CD4-positive, alpha-beta memory T cell (primary cell): ENCODE measurements at regions of chr1 and their contacts with region 1.

Region 1: GRCh38 chr1:185595835-185596667 is 138.1 kb upstream of the HMCN1 start:
- DNase-seq: peak; percentile 56 to 67 (median 62)
- H3K4me3 ChIP-seq: no peak overlapping the region
- H3K4me3 Mint-ChIP-seq: no peak overlapping the region
- H3K27ac ChIP-seq: no peak overlapping the region
- H3K27ac Mint-ChIP-seq: peak overlapping the region in 6 of 7 donors; percentile 14 to 72 (median 39)
- H3K4me1 ChIP-seq: peaks cover 27% of the 10 kb centered on the region
- H3K4me1 Mint-ChIP-seq: peaks cover 31 to 39% (median 33%) of the 10 kb centered on the region in 4 donors
- H3K27me3 ChIP-seq: no peaks in the 10 kb centered on the region
- H3K27me3 Mint-ChIP-seq: no peaks in the 10 kb centered on the region

Region 2: DNA sequence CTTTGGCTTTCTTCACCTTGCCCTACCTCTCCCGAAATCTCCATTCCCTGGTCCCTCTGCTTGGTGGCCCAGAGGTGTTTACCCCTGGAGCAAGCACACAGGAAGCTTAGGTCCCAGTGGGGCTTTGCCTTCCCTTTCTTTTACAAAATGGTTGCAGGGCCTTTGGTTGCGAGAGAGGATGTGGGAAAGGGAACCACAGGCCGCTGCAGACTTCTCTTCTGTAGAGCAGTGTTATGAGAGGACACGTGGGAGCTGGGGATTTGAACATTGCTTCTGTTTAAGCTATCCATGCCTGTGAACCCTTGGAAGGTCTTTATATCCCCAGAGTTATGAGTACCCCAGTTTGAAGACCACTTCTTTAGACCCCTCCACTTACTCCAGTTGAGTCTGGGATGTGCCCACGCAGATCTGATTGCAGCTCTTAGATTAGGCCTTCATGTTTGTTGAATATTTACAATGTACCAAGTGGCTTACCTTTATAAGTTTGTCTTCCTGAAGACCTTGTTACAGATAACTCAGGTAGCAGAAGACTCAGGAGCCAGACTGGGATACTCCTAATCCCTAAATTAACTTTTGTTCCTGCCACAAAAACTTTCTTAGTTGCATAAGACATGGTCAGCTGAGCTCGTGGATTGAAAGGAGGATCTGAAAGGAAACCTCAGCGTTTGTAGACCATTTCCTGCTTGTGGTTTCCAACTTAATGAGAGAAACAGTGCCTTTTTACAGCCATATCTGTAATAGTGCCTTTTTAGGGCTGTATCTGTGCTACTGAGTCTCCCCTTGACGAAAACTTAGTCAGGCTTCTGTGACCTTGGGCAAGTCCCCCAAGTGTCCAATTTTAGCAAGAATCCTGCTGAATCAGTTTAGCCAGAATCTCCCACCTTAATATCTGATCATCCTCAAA is 257.1 kb before region 1 on chr1:
- CTCF ChIA-PET with region 1: interaction called, 15 read pairs
- POLR2A ChIA-PET with region 1: interaction called, 9 read pairs
- intact Hi-C with region 1: no loop called
- DNase-seq: peak; percentile 50 to 62 (median 54)
- H3K4me3 ChIP-seq: peak overlapping the region in 1 of 2 donors; percentile 10
- H3K4me3 Mint-ChIP-seq: peak overlapping the region in 7 of 8 donors; percentile 21 to 88 (median 64)
- H3K27ac ChIP-seq: peak overlapping the region; percentile 25
- H3K27ac Mint-ChIP-seq: peak overlapping the region; percentile 62 to 91 (median 85)
- H3K4me1 ChIP-seq: peaks cover 37% of the 10 kb centered on the region
- H3K4me1 Mint-ChIP-seq: peaks cover 25 to 40% (median 32%) of the 10 kb centered on the region in 4 donors
- H3K27me3 ChIP-seq: no peaks in the 10 kb centered on the region
- H3K27me3 Mint-ChIP-seq: no peaks in the 10 kb centered on the region

Region 3: DNA sequence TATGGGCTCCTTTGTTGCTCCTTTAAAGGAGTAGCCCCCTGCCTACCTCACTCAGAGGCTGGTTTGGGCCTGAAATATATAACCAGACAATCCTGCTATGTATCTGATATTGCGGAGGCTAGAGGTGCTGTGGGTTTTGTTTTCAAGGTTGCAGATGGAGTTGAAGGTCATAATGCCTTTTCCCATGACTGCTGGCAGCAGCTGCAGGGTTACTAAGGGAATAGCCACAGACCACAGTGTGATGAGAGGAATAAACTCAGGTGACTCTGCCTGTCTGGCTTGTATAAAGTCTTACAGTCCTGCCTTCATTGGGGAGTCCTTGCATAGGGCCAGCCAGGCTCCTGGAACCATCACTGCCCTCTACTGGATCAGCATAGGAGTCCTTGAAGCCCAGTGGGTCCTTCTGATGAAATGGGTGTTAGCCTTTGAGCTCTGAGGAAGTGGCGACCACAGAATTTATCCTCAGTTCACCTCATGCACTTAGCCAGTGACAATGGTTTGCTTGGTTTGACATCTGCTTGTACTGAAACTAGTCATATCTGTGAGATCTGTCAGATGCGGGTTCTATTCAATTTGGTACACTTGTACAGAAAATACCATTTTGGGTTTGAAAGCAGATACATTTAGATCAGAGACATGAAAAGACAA is 36.2 kb before region 1 on chr1:
- CTCF ChIA-PET with region 1: interaction called, 61 read pairs
- POLR2A ChIA-PET with region 1: interaction called, 8 read pairs
- intact Hi-C with region 1: loop called (anchors 1 kb)
- DNase-seq: peak; percentile 56 to 60 (median 59)
- H3K4me3 ChIP-seq: no peak overlapping the region
- H3K4me3 Mint-ChIP-seq: peak overlapping the region in 6 of 8 donors; percentile 5 to 78 (median 62)
- H3K27ac ChIP-seq: no peak overlapping the region
- H3K27ac Mint-ChIP-seq: peak overlapping the region; percentile 76 to 94 (median 86)
- H3K4me1 ChIP-seq: peaks cover 51% of the 10 kb centered on the region
- H3K4me1 Mint-ChIP-seq: peaks cover 39 to 52% (median 46%) of the 10 kb centered on the region in 4 donors
- H3K27me3 ChIP-seq: no peaks in the 10 kb centered on the region
- H3K27me3 Mint-ChIP-seq: no peaks in the 10 kb centered on the region

Region 4: GRCh38 chr1:185574139-185574835 is 21.8 kb before region 1 on chr1:
- CTCF ChIA-PET with region 1: interaction called, 29 read pairs
- POLR2A ChIA-PET with region 1: interaction called, 9 read pairs
- intact Hi-C with region 1: no loop called
- DNase-seq: no peak
- H3K4me3 ChIP-seq: no peak overlapping the region
- H3K4me3 Mint-ChIP-seq: no peak overlapping the region
- H3K27ac ChIP-seq: no peak overlapping the region
- H3K27ac Mint-ChIP-seq: peak overlapping the region in 2 of 7 donors; percentile 2 to 75
- H3K4me1 ChIP-seq: peaks cover 15% of the 10 kb centered on the region
- H3K4me1 Mint-ChIP-seq: peaks cover 23 to 27% (median 26%) of the 10 kb centered on the region in 4 donors
- H3K27me3 ChIP-seq: no peaks in the 10 kb centered on the region
- H3K27me3 Mint-ChIP-seq: no peaks in the 10 kb centered on the region

Region 5: DNA sequence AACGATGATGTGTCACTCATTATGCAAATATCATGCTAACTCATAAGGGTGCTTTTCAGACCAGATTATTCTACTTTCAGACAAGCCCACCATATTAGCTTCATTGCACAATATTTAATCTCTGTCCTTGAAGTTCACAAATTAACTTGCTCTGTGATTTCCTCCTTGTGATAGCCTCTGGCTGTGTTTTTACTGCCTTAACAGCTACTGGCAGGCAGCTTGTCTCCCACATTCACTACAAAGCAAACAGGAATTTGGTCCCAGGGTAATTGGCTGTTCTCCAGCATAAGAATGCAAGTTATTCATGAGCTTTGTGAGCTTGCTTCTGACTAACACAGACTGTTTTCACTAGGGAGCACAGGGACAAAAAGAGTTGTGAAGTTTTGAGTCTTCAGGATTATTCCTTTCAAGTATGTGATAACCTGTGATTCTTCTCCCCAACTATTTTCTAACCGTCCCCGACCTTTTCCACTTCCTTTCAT is 50.2 kb after region 1 on chr1:
- CTCF ChIA-PET with region 1: interaction called, 11 read pairs
- POLR2A ChIA-PET with region 1: no interaction called
- intact Hi-C with region 1: no loop called
- DNase-seq: no peak
- H3K4me3 ChIP-seq: no peak overlapping the region
- H3K4me3 Mint-ChIP-seq: peak overlapping the region in 1 of 8 donors; percentile 57
- H3K27ac ChIP-seq: no peak overlapping the region
- H3K27ac Mint-ChIP-seq: peak overlapping the region in 2 of 7 donors; percentile 36 to 90
- H3K4me1 ChIP-seq: peaks cover 23% of the 10 kb centered on the region
- H3K4me1 Mint-ChIP-seq: peaks cover 20 to 44% (median 24%) of the 10 kb centered on the region in 4 donors
- H3K27me3 ChIP-seq: no peaks in the 10 kb centered on the region
- H3K27me3 Mint-ChIP-seq: no peaks in the 10 kb centered on the region

Region 6: GRCh38 chr1:185681034-185681633 is 85.1 kb after region 1 on chr1:
- CTCF ChIA-PET with region 1: interaction called, 17 read pairs
- POLR2A ChIA-PET with region 1: no interaction called
- intact Hi-C with region 1: no loop called
- DNase-seq: peak in 4 of 5 donors; percentile 36 to 43 (median 38)
- H3K4me3 ChIP-seq: no peak overlapping the region
- H3K4me3 Mint-ChIP-seq: peak overlapping the region in 1 of 8 donors; percentile 34
- H3K27ac ChIP-seq: no peak overlapping the region
- H3K27ac Mint-ChIP-seq: no peak overlapping the region
- H3K4me1 ChIP-seq: peaks cover 26% of the 10 kb centered on the region
- H3K4me1 Mint-ChIP-seq: peaks cover 19 to 32% (median 26%) of the 10 kb centered on the region in 4 donors
- H3K27me3 ChIP-seq: no peaks in the 10 kb centered on the region
- H3K27me3 Mint-ChIP-seq: no peaks in the 10 kb centered on the region